Activated T-helper 1 cell treated with anti-CD3 and anti-CD28 coated beads, Interleukin-12 subunit alpha, Interleukin-12 subunit beta, Interleukin-2, Interleukin-4 antibody, amounts not matched to agents 30 ng/mL and 10 ng/mL and 1 ng/mL, durations not matched to agents 14 hours and 24 hours and 36 hours (primary cell): ENCODE measurements at regions of chr4 and their contacts with region 1.

Region 1: DNA sequence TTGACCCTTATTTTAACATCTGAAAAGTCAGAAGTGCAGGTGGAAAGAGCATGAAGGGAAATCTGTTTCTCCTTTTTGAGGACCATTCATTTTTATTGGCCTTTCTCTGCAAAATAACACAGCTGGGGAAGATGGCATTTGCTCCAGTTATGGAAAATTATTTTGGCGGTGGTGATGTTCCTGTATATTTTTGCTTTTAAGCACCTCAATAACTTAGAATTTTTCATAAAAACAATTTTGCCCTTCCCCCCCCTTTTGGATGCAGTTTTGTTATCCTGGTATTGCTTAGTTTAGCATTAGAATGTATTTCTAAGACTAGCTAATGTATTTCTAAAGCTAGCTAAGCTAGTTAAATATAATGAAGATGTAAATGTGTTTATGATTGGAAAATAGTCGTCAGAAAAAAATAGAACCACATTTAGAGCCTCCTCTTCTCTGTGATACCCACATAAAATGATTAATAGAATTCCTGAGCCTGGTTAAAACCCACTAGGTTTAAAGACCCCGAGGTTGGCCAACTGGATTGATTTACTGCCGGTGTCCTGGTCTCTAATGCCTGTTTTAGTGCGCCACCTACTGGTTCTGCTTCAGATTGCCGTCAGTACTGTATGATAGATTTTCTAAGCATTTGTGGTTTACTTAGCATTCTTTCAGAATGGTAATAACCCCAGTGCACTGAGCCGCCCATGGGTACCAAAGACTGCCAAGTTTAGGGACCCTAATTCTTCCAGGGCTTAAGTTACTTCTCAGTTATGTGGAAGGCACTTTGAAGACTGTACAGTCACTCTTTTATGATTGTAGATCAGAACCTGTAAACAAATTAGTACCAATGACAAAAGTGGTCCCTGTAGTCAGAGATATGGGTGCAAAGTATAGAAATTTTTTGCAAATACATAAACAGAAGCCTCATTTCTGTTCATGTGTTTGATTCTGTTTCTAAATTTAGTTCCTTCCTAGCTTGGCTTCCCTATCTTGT is 11.4 kb downstream of the KLF3 start:
- DNase-seq: peak; percentile 69
- H3K4me3 Mint-ChIP-seq: no peak overlapping the region
- H3K27ac Mint-ChIP-seq: no peak overlapping the region
- H3K4me1 Mint-ChIP-seq: peaks cover 66% of the 10 kb centered on the region
- H3K27me3 Mint-ChIP-seq: no peaks in the 10 kb centered on the region

Region 2: DNA sequence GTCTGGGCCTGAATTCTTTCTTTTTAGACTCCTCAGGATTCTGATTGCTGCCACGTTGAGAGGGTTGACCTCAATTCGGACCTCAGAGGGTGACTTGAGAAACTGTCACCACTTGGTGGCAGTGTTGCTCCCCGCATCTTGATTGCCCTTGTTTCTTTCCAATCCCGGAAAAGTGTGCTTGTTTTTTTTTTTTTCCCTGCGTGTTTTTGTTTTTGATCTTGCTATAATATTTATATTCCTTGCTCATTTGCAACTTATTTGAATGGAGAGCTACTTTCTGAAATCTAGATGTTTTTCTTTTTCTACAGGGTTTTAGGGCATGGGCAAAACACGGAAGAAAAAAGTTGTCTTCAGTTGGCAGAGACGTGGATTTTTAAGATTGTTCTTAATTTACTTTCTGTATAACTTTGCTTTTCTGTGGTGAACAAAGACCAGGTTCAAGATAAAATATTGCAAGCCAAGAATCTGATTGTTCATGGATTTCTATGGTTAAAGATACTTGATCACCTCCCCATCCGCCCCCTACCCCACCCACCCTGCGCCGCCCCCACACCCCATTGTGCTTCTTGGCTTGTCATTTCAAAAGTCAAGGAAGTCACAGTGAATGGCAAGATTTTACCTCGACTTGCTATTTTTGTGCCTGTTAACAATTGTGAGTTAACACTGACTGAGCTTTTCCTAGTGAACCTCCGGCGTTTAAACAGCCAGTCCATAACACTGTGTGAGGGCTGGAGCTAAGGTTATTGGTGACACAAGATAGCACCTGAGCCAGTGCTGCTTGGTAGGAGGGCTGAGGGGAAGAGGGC is 613.1 kb before region 1 on chr4:
- intact Hi-C with region 1: loop called (anchors 1 kb)
- DNase-seq: peak; percentile 42
- H3K4me3 Mint-ChIP-seq: peak overlapping the region; percentile 83
- H3K27ac Mint-ChIP-seq: peak overlapping the region; percentile 69
- H3K4me1 Mint-ChIP-seq: peaks cover 16% of the 10 kb centered on the region
- H3K27me3 Mint-ChIP-seq: no peaks in the 10 kb centered on the region

Region 3: GRCh38 chr4:38319456-38320342 is 355.7 kb before region 1 on chr4:
- intact Hi-C with region 1: loop called (anchors 1 kb)
- DNase-seq: peak; percentile 83
- H3K4me3 Mint-ChIP-seq: peak overlapping the region; percentile 48
- H3K27ac Mint-ChIP-seq: peak overlapping the region; percentile 79
- H3K4me1 Mint-ChIP-seq: peaks cover 55% of the 10 kb centered on the region
- H3K27me3 Mint-ChIP-seq: peaks cover 5% of the 10 kb centered on the region

Region 4: DNA sequence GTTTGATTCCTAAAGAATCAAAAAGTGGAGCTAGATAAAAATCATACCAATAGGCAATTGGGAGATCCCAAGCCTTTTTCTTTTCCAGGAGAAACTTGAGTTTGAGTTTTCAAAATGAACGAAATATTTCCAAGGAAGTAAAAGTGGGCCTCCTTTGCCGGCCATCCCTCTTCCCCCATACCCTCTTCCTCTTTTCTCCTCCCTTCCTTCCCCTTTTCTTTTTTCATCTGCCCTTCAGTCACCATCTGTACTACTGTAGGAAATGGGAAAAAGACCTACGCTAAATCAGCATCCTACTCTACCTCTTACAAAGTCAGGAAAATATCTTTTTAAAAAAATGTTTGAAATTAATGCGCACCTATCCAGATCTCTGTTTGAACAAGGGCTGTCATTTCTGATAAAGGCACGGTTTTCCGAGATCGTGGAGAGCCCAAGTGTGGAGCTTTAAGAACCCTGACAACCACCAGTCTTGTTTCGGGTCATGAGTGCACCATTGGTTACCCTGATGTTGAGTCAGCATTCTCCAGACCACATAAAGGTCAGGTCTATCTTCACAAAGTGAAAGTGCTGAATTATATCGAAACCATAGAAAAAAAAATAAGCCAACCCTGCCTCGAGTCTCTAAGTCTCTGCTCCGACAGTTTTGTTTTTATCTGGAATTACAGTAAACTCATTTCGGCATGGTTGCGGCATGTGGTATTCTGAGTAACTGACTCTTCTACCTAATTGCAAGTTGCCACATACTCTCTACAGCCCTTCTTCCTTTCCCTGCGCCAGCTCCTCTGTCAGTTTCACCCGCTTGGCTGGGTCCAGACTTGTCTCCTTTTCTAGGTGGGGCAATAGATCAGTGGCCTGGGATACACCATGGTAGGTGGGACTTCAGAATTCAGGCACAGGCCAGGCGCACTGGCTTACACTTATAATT is 151.6 kb before region 1 on chr4:
- intact Hi-C with region 1: loop called (anchors 2 kb)
- DNase-seq: peak; percentile 48
- H3K4me3 Mint-ChIP-seq: peak overlapping the region; percentile 19
- H3K27ac Mint-ChIP-seq: peak overlapping the region; percentile 51
- H3K4me1 Mint-ChIP-seq: peaks cover 23% of the 10 kb centered on the region
- H3K27me3 Mint-ChIP-seq: peaks cover 32% of the 10 kb centered on the region

Region 5: DNA sequence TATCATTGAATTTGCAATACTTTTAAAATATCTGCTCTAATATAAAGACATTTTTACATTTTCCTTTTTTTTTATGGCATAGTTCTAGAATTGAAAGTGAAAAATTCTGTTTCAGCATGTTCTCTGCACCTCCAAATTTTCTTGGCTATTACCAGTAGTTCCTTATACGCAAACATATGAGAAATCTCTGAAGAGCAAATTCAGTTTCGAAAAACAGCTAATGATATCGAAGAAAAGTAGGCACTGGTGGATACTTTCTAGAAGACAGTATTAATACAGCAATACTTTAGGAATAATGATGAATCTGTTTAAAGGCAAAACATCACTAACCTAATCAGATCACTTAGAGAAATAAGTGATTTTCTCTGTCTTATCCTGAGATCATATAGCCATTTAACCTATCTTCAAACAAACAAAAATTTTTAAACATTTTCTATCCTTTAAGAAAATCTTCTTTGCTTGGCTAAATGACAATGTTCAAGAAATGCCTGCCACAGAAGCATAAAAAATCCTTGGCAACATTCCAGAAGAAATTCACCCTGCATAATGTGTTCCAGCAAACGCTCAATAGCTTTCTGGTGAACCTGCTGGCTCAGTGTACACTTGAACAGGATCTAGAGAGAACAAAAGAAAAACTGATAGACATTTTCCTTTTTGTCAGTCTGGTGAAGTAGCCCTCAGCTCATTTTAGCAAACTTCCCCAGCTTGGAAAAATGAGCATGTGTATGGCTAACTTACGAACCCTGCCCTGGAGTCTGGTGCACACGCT is 62.6 kb before region 1 on chr4:
- intact Hi-C with region 1: loop called (anchors 5 kb)
- DNase-seq: no peak
- H3K4me3 Mint-ChIP-seq: no peak overlapping the region
- H3K27ac Mint-ChIP-seq: no peak overlapping the region
- H3K4me1 Mint-ChIP-seq: peaks cover 18% of the 10 kb centered on the region
- H3K27me3 Mint-ChIP-seq: peaks cover 2% of the 10 kb centered on the region

Region 6: DNA sequence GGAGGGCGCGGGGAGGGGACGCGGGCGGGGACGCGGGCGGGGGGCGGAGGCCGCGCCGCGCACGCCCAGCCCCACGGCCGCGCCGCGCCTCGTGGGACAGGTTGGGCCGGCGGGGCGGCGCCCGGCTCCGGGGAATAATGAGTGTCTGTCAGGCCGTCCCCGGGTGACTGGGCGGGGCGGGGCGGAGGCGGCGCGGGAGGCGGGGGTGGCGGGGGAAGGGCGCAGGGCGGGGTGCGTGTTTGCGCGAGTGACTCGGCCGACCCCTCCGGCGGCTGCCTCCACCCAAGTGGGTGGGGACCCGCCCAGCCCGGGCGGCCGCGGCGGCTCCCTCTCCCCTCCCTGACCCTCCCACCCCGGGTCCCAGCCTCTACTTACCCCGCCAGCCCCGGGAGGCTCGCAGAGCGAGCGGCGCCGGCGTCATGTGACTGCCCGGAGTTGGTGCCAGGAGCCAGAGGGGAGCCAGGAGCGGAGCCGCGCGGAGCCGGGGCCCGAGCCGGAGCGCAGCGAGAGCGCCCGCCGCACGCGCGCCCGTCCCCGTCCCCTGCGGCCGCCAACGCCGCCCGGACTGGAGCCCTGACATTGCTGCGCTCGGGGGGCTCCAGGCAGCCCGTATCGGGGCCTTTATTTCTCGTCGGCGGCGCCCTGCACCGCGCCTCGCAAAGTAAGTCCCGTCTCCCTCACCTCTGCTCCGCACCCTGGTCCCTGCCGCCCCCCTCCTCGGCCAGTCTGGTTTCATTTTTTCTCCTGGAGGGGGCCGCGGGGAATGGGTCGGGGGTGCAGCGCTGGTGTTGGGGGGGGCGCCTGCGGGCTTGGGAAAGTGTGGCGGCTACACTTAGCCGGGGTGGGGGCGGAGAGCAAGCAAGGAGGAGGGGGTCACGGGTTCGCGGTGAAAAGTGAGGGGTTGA is 11.4 kb before region 1 on chr4 and contains the start of gene KLF3:
- intact Hi-C with region 1: loop called (anchors 1 kb)
- DNase-seq: peak; percentile 86
- H3K4me3 Mint-ChIP-seq: peak within 1 kb of the TSS; percentile 85
- H3K27ac Mint-ChIP-seq: peak within 1 kb of the TSS; percentile 53
- H3K4me1 Mint-ChIP-seq: peaks cover 55% of the 10 kb centered on the region
- H3K27me3 Mint-ChIP-seq: peaks cover 24% of the 10 kb centered on the region
- total RNA-seq, gene KLF3: 1.8 and 1.9 TPM in 2 replicates

Region 7: DNA sequence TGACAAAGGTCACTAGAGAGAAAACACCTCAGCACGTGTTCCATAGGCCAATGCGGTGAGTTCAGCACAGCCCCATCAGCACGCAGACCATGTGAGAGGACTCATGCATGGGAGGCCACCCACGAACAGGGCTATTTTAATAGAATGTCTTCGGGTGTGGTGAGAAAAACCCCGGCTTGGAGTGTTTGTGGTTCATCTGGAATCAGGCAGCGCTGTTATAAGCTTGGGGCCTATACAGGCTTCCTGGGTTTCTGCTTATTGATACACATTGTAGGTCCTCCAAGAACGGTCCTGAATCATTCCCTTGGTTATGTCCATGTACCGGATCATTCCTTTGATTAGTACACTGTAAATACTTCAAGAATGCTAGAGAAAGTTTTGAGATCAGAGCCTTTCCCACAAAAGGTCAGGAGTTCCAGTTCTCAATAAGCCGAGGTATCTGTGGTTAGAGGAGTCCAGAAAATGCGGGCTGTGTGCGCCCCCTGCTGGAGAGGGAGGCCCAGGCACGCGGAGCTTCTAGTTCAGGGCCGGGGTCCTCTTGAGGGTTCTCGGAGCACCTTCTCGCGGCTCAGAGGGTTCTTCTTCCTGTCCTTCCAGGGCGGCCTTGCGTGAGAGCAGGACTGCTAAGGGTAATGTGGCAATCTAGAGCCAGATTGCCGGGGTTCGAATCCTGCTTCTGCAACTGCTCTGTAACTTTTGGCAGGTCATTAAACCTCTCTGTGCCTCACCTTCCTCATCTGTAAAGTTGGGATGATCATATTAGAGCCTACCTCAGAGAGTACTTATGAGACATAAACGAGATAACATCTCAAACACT is 55.6 kb after region 1 on chr4:
- intact Hi-C with region 1: loop called (anchors 1 kb)
- DNase-seq: peak; percentile 66
- H3K4me3 Mint-ChIP-seq: no peak overlapping the region
- H3K27ac Mint-ChIP-seq: no peak overlapping the region
- H3K4me1 Mint-ChIP-seq: peaks cover 22% of the 10 kb centered on the region
- H3K27me3 Mint-ChIP-seq: peaks cover 22% of the 10 kb centered on the region